Activated CD4-positive, alpha-beta memory T cell treated with anti-CD3 and anti-CD28 coated beads for 36 hours (primary cell): ENCODE measurements at regions of chr3 and their contacts with region 1.

Region 1: DNA sequence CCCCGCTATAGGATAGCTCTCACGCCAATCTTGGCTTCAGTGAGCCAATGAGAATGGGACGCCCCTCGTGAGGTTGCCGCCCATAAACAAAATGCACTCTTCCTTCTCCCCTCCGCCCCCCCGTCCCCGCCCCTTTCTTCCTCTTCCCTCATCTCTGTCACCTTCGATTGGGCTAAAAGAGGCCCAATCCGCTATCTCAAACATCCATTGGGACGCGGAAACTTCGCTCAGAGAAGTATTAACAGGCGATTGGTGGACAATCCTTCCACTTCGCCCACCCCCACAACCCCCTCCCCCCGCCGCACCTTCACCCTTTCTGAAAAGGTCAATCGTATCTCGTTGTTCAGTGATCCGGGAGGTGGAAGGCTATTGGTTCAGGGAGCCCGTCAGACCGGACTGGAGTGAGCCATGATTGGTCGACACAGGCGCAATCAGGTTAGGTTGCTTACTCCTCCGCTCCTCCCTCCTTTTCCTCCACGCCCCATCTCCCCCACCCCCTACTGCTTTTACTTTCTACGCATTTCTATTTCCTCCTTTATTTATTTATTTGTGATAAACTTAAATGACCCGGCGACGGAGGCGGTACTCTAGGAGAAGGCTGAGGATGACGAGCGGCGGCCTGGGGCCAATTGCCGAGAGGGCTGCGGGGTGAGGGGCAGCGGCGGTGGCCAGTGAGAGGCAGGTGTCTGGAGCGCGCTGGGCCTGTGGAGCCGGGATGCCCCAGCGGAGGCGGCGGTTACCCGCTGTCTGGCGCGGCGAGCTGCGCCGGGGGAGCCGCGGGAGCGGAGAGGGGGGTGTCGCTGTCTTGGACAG is 447 bp upstream of the ZBTB20 start:
- DNase-seq: peak; percentile 98
- H3K4me3 Mint-ChIP-seq: peak overlapping the region; percentile 94
- H3K27ac Mint-ChIP-seq: peak overlapping the region; percentile 91
- H3K4me1 Mint-ChIP-seq: peaks cover 23% of the 10 kb centered on the region
- H3K27me3 Mint-ChIP-seq: peaks cover 2% of the 10 kb centered on the region

Region 2: DNA sequence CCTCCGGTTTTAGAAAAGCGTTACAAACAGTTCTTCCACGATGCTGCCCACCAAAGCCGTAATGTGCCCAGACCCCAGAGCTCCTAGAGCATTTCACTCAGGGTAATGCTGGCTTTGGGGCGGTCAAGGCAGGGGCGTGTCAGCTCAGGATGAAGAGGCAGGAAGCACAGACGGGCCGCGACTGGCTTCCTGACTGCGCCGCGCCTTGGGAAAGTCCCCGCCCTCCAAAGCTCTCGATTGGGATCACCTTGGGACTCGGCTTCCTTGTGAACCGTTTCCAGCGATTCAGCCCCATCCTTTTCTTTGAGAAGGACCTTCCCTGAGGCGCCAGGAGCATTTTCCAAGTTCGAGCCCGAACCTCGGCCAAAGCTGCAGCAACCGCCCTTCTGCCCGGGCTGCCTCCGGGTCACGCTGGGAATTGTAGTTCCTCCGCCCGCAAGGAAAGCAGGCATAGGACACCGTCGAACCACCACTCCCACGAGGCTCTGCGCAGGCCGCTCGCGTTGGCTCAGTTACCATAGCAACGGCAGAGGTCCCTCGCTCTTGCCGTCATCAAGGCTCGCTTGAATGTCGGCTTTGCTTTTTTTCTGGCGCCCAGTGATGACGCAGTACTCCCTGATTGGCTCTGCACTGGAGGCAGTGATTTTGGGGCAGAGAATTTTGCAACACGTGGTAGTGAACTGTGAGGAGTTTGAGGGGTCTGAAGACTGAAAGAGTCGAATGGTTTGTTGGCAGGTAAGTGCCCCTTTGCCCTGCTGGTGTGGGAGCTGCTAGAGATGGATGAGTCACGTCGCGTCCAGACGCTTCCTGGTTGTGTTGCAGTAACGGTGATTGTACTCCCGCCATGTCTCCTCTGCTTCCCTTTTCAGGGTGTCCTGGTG is 1091.2 kb before region 1 on chr3 and contains the starts of genes CCDC191 and QTRT2:
- CTCF ChIA-PET with region 1: no interaction called
- POLR2A ChIA-PET with region 1: no interaction called
- intact Hi-C with region 1: loop called (anchors 1 kb)
- DNase-seq: peak; percentile 99
- H3K4me3 Mint-ChIP-seq: peak within 1 kb of the TSS; percentile 94
- H3K27ac Mint-ChIP-seq: peak within 1 kb of the TSS; percentile 89
- H3K4me1 Mint-ChIP-seq: peaks cover 28% of the 10 kb centered on the region
- H3K27me3 Mint-ChIP-seq: no peaks in the 10 kb centered on the region
- total RNA-seq, gene CCDC191: 3.5 TPM
- total RNA-seq, gene QTRT2: 27.2 to 30.7 TPM

Region 3: GRCh38 chr3:114899186-114899931 is 248.2 kb before region 1 on chr3:
- CTCF ChIA-PET with region 1: no interaction called
- POLR2A ChIA-PET with region 1: no interaction called
- intact Hi-C with region 1: no loop called
- DNase-seq: no peak
- H3K4me3 Mint-ChIP-seq: no peak overlapping the region
- H3K27ac Mint-ChIP-seq: no peak overlapping the region
- H3K4me1 Mint-ChIP-seq: peaks cover 4% of the 10 kb centered on the region
- H3K27me3 Mint-ChIP-seq: no peaks in the 10 kb centered on the region

Region 4: GRCh38 chr3:115099986-115100571 is 47.5 kb before region 1 on chr3:
- CTCF ChIA-PET with region 1: interaction called, 3 read pairs
- POLR2A ChIA-PET with region 1: no interaction called
- intact Hi-C with region 1: loop called (anchors 1 kb)
- DNase-seq: peak; percentile 12
- H3K4me3 Mint-ChIP-seq: peak overlapping the region; percentile 75
- H3K27ac Mint-ChIP-seq: peak overlapping the region; percentile 49
- H3K4me1 Mint-ChIP-seq: peaks cover 33% of the 10 kb centered on the region
- H3K27me3 Mint-ChIP-seq: no peaks in the 10 kb centered on the region

Region 5: DNA sequence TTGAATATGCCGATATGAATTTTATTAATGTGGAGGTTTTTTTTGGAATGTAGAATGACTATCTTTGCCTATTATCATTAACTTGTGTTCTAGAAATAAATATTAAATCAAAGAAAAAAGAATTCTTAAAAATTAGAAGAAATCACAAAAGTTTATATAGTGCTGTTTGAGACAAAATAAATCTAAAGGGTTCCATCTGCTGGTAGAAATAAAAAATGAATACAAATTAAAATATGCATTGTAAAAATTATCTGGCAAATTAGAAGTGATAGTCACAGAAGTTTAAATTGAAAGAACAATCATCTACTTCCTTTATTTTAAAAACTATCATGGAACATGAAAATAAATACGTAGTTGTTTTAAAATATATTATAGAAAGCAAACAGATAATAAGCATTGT is 22.3 kb after region 1 on chr3:
- CTCF ChIA-PET with region 1: interaction called, 8 read pairs
- POLR2A ChIA-PET with region 1: interaction called, 27 read pairs
- intact Hi-C with region 1: loop called (anchors 1 kb)
- DNase-seq: no peak
- H3K4me3 Mint-ChIP-seq: no peak overlapping the region
- H3K27ac Mint-ChIP-seq: no peak overlapping the region
- H3K4me1 Mint-ChIP-seq: peaks cover 12% of the 10 kb centered on the region
- H3K27me3 Mint-ChIP-seq: no peaks in the 10 kb centered on the region

Region 6: GRCh38 chr3:115616461-115616860 is 468.9 kb after region 1 on chr3:
- CTCF ChIA-PET with region 1: no interaction called
- POLR2A ChIA-PET with region 1: no interaction called
- intact Hi-C with region 1: loop called (anchors 1 kb)
- DNase-seq: peak; percentile 67
- H3K4me3 Mint-ChIP-seq: no peak overlapping the region
- H3K27ac Mint-ChIP-seq: no peak overlapping the region
- H3K4me1 Mint-ChIP-seq: peaks cover 23% of the 10 kb centered on the region
- H3K27me3 Mint-ChIP-seq: peaks cover 10% of the 10 kb centered on the region

Region 7: DNA sequence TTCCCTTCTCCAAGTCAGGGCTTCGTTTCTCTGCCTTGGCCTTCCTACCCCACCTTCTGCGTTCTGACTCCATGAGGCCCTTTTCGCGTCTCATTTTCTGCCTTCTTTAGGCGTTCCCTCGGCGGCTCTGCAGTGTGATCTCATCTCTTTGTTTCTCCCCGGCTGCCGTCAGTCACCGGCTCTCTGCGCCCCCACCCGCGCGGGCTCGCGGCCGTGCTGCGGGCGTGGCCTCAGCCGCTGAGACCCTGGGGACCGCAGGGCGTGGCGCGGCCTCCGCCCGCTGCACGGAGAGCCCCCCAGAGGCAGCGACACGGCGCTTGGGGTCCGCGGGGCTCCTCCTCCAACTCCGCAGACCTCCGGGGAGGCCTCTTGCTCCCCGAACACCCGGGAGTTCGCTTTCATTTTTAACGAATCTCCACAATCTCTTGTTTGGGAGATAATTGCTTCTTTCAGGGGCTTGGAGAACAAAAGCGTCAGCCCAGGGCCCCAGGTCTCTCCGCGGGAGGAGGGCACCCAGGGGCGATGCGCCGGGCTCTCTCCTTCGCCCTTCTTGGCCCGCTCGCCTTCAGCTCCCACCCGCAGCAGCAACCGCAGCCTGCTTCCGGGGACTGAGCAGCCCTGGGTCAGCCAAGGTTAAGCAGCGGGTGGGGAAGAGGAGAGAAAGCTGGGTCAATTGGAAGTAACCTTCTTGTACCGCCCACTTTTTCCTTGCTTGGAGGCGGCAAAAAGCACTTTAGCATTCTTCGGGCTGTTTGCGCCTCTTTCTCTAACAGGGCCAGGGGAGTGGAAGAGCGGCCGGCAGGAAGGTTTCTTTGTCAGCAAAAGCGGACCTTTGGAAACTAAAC is 511.0 kb after region 1 on chr3:
- CTCF ChIA-PET with region 1: no interaction called
- POLR2A ChIA-PET with region 1: no interaction called
- intact Hi-C with region 1: loop called (anchors 1 kb)
- DNase-seq: peak; percentile 86
- H3K4me3 Mint-ChIP-seq: peak overlapping the region; percentile 82
- H3K27ac Mint-ChIP-seq: peak overlapping the region; percentile 92
- H3K4me1 Mint-ChIP-seq: peaks cover 40% of the 10 kb centered on the region
- H3K27me3 Mint-ChIP-seq: no peaks in the 10 kb centered on the region